ENCODE measurements at regions of chr4 and their contacts with region 1.

Region 1: GRCh38 chr4:42519803-42520417 is 122.6 kb downstream of the SHISA3 start:
- DNase-seq: peak in 1 of 2 donors; percentile 30
- H3K4me3 ChIP-seq: no peak overlapping the region
- H3K27ac ChIP-seq: no peak overlapping the region
- H3K4me1 ChIP-seq: peaks cover 0 to 13% (median 0%) of the 10 kb centered on the region in 4 donors
- H3K27me3 ChIP-seq: no peaks in the 10 kb centered on the region
- CTCF ChIP-seq: peak; percentile 64 to 71

Region 2: DNA sequence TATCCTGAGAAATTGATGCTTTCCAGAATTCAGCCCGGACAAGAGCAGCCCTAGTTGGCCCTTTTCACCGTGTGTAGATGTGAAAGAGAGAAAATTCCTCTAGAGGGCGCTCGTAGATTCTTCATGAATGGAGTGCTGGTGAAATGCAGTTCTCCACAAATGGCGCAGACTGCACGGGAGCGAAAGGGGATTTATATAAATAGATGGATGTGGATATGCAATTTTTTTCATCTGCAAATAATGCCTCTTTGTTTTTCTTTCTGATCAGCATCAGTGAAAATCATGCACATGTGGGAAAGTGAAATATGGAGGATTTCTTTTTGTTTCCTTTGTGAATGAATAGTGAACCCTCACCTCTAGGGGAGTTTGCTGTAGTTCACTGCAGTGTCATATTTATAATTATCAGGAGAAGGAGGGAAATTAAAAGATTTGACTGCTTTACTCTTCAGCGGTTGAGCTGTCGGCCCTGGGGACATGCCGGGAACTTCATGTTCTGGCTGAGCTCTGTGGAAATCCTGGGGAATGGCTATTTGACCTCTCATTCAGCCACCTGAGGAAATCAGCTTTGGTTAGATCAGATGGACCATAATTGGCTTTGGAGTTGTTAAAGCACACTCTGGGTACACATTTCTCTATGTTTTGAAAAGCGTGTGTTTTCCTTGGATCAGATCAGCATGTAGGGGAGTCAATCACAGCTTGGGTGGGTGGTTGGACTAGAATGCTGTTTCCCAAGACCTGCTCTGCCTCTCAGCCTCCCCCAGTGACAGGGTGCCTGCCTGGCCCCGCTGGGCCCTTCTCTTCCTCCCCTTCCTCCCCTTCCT is 237.6 kb before region 1 on chr4:
- intact Hi-C with region 1: loop called (anchors 10 kb)
- DNase-seq: peak in 1 of 2 donors; percentile 52
- H3K4me3 ChIP-seq: no peak overlapping the region
- H3K27ac ChIP-seq: no peak overlapping the region
- H3K4me1 ChIP-seq: peaks cover 0 to 6% (median 0%) of the 10 kb centered on the region in 4 donors
- H3K27me3 ChIP-seq: no peaks in the 10 kb centered on the region
- CTCF ChIP-seq: peak; percentile 54 to 56

Region 3: DNA sequence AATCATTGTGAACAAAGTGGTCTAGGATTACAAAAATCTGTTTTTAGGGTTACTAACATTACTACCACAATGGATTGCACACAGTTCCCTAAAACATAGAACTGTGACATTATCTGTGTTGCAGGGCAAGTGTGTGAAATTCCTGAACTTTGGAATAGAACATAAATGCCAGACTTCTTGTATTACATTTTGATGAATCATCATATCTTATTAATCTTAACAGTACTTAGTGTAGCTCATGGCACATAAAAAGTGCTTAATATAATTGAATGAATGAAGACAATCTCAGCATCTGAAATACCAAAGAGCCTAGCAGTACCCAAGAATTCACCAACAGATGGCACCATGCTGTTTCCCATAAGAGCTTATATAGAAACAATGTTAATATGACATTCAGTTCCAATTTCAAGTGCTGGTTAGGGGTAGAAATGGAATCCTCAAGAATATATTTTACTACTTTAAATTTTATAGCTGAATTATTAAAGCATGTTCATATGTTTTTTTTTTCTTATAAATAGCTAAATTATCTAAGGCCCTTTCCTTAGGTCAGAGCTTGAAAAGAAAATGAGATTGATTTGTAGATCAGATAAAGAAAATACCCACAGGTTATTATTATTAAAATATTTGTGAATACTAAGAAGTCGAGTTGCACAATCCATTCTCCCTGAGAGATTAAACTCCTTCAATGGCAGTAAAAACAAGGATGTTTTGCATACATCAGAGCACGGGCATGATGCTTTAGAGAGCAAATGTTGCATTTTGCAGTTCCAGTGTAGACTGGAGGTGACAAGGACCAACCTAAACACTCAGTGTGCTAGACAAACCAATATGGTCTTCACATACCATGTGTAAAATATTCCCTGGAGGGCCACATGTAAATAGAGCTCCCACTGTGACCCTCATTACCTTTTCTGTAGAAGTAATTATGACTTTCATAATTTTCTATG is 148.3 kb before region 1 on chr4:
- intact Hi-C with region 1: loop called (anchors 5 kb)
- DNase-seq: no peak
- H3K4me3 ChIP-seq: no peak overlapping the region
- H3K27ac ChIP-seq: no peak overlapping the region
- H3K4me1 ChIP-seq: no peaks in the 10 kb centered on the region
- H3K27me3 ChIP-seq: no peaks in the 10 kb centered on the region
- CTCF ChIP-seq: peak; percentile 53 to 54

Region 4: GRCh38 chr4:42453612-42454011 is 66.3 kb before region 1 on chr4:
- intact Hi-C with region 1: no loop called
- DNase-seq: no peak
- H3K4me3 ChIP-seq: no peak overlapping the region
- H3K27ac ChIP-seq: no peak overlapping the region
- H3K4me1 ChIP-seq: peaks cover 0 to under 1% (median 0%) of the 10 kb centered on the region in 4 donors
- H3K27me3 ChIP-seq: no peaks in the 10 kb centered on the region
- CTCF ChIP-seq: no peak

Measured in tibial artery (tissue), 4 donors.